BJ (cell line): ENCODE measurements at regions of chr4 and their contacts with region 1.

Region 1: DNA sequence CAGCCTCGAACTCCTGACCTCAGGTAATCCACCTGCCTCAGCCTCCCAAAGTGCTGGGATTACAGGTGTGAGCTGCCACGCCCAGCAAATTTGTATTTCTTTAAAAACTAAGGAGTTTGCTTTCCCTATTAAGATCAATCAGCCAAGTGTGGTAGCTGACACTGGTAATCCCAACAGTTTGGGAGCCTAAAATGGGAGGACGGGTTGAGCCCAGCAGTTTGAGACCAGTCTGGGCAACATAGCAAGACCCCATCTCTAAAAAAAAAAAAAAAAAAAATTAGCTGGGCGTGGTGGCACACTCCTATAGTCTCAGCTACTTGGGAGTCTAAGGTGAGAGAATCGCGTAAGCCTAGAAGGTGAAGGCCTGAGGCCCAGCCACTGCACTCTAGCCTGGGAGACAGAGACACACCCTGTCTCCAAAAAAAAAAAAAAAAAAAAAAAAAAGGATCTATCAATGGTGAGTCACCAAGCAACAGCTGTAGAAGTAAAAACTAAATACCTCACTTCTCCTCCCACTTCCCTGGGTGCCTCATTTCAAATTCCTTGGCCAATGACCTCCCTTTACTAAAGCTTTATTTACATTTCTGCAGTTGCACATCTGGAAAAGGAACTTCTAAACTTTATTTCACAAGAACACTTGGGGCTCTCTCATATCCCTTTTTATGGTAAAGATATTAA is 54.5 kb downstream of the LDB2 start:
- DNase-seq: peak; percentile 80
- H3K4me3 ChIP-seq: no peak overlapping the region
- H3K27me3 ChIP-seq: no peaks in the 10 kb centered on the region
- CTCF ChIP-seq: no peak

Region 2: GRCh38 chr4:16573744-16574143 is 270.2 kb before region 1 on chr4:
- CTCF ChIA-PET with region 1: no interaction called
- POLR2A ChIA-PET with region 1: interaction called, 22 read pairs
- DNase-seq: peak; percentile 41
- H3K4me3 ChIP-seq: no peak overlapping the region
- H3K27me3 ChIP-seq: no peaks in the 10 kb centered on the region
- CTCF ChIP-seq: no peak

Region 3: DNA sequence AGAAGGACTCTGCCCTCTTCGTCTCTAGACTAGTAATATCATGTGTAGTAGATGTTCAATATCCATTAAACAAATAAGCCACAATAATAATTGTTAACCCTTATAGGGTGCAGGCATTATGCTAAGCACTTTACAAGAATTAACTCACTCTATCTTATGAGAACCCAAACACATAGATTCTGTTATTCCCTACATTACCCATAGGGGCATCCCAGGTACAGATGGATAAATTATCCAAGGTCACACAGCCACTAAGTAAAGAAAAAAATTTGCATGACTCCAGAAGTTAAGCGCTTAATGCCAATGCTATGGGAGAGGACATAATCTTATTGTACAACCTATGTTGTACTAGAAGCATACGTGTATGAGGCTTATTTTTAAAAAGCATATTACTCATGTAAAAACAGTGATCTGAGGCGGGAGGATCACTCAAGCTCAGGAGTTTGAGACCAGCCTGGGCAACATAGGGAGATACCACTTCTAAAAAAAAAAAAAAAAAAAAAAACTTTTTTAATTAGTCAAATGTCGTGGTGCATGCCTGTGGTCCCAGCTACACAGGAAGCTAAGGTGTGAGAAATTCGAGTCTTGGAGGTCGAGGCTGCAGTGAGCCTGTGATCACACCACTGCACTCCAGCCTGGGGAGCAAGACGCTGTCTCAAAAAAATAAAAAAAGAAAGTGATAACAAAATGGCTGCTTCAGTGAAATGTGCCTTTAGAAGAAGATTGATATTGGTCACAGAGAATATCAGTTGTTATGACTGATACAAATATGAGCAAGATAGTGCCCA is 40.9 kb after region 1 on chr4:
- CTCF ChIA-PET with region 1: no interaction called
- POLR2A ChIA-PET with region 1: interaction called, 14 read pairs
- DNase-seq: no peak
- H3K4me3 ChIP-seq: no peak overlapping the region
- H3K27me3 ChIP-seq: no peaks in the 10 kb centered on the region
- CTCF ChIP-seq: no peak

Region 4: DNA sequence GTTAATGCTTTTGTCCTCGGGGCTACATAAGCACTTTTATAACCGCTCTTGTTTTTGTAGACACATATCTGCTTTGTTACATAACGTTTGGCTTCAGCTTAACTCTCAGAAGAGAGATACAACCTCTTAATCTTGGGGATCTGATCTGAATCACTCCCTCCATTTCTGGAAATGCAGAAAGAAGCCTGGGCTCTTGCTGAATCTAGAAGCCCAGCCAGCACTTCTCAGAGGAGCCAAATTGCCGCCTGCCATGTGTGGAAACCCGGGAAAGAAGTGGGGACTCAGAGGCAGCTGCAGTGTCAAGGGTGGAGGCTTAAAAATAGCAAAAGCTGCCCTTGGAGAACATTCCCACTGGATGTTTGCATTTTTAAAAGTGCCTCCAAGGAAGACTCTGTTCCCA is 123.8 kb after region 1 on chr4:
- CTCF ChIA-PET with region 1: no interaction called
- POLR2A ChIA-PET with region 1: no interaction called
- DNase-seq: peak; percentile 51
- H3K4me3 ChIP-seq: no peak overlapping the region
- H3K27me3 ChIP-seq: no peaks in the 10 kb centered on the region; the same call in 1 of the 2 replicates
- CTCF ChIP-seq: no peak